PC-9 (cell line): ENCODE measurements at regions of chr3 and their contacts with region 1.

Region 1: DNA sequence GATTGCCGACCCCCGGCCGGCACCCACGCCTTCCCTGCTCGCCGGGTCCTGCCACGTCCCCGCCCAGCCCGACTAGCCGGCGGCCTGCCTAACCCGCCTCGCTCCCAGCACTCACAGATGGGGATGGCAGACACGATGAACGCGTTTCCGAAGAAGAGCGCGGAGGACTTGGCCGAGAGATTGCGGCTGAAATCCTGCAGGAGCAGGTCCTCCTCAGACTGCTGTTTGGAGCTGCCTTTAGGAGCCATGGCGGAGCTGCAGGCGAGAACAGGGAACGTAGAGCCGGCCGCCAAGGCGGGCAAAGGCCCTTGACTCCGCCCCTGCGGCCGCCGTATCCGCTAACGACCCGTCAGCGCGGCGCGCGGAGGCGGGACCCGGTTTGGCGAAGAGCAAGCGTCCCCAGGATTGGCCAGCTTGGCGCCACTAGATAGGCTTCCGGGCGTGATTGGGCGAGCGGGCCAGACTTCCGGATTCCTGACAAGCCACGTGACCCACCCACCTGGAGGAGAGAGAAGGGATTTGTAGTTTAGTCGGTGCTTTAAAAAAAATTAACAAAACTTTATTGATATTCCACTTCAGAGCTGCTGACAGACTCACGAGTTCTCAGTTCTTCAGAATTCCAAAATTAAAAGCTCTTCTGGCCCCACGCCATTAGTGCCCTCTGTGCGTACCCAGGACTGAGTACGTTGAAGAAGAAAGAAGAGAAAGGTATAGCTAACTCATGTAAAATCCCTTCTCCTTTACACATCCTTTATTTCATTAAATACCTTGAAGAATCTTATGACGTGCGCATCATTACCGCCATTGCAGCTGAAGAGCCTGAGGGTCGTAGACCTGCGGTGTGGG is at the start of gene SSR3:
- DNase-seq: peak; percentile 98 to 99
- H3K4me3 ChIP-seq: peak within 1 kb of the TSS; percentile 99
- H3K27ac ChIP-seq: peak within 1 kb of the TSS; percentile 83
- H3K4me1 ChIP-seq: peaks cover 35% of the 10 kb centered on the region
- H3K27me3 ChIP-seq: no peaks in the 10 kb centered on the region
- CTCF ChIP-seq: peak; percentile 19; the same call in 1 of the 2 replicates
- total RNA-seq, gene SSR3: 117 and 152 TPM in 2 replicates

Region 2: DNA sequence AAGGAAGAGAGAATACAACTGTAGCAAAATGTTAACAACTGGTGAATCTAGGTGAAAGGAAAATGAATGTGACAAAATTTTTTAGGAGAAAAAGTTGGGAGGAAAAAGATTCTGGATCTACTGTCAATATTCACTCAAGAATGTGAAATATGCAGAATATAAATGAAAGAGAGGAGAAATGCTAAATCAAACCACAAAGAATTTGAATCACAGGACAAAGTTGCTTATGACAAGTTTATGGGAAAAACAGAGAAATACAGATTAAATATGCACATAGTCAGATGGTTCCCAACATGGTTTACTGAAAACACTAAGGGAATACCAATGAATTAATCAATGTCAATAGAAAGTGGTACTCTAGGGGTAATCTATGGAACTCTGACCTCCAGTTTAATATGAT is 776.6 kb before region 1 on chr3:
- CTCF ChIA-PET with region 1: no interaction called
- POLR2A ChIA-PET with region 1: interaction called, 17 read pairs
- intact Hi-C with region 1: no loop called
- DNase-seq: no peak
- H3K4me3 ChIP-seq: no peak overlapping the region
- H3K27ac ChIP-seq: no peak overlapping the region
- H3K4me1 ChIP-seq: no peaks in the 10 kb centered on the region
- H3K27me3 ChIP-seq: no peaks in the 10 kb centered on the region
- CTCF ChIP-seq: no peak

Region 3: DNA sequence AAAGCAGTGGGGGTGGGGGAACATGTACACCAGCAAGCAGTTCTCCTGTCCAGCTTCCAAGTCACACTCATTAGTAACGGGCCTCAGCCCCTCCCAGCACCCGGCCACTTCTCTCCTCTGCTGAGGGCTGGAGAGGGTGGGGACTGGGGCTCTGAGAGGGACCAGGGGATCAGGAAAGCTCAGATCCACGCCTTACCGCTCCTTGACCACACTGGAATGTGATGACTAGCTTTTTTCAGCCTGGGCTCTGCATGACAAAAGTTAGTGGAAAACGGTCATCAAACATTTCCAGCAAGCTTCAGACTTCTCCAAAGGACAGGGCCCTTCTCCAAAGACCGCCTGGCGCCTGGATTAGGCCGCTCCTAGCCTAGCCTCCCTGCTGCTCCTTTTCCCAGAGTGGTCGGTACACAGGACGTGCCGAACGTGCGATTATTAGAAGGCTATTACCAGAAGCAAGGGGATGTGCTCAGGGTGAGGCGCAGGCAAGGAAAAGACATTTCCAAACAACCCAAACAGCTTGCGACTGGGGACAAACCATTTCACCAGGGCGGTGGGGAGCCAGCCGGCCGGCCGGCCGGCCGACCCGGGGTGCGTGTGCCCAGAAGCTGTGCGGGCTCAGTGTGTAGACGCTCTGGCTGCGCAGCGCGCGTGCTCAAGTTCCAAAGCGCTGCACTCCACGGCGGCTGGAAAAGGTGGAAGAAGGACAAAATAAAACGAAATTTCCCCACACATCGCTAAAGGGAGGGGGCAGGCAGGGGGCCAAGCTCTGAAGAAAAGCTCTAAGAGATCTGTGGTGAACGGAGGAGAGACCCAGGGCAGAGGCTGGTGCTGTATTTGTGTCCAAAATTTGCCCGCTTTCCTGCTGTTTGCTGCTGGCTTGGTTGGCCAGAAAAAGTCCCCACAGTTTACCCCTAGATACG is 50.9 kb after region 1 on chr3:
- CTCF ChIA-PET with region 1: no interaction called
- POLR2A ChIA-PET with region 1: interaction called, 3 read pairs
- intact Hi-C with region 1: loop called (anchors 2 kb)
- DNase-seq: peak; percentile 75 to 82
- H3K4me3 ChIP-seq: peak overlapping the region; percentile 56
- H3K27ac ChIP-seq: peak overlapping the region; percentile 49
- H3K4me1 ChIP-seq: peaks cover 44% of the 10 kb centered on the region
- H3K27me3 ChIP-seq: no peaks in the 10 kb centered on the region
- CTCF ChIP-seq: no peak

Region 4: GRCh38 chr3:156630081-156630772 is 75.2 kb after region 1 on chr3:
- CTCF ChIA-PET with region 1: interaction called, 3 read pairs
- POLR2A ChIA-PET with region 1: interaction called, 5 read pairs
- intact Hi-C with region 1: loop called (anchors 1 kb)
- DNase-seq: peak; percentile 53 to 93
- H3K4me3 ChIP-seq: no peak overlapping the region
- H3K27ac ChIP-seq: peak overlapping the region; percentile 84
- H3K4me1 ChIP-seq: peaks cover 67% of the 10 kb centered on the region
- H3K27me3 ChIP-seq: no peaks in the 10 kb centered on the region
- CTCF ChIP-seq: no peak